ENCODE measurements at regions of chr17 and their contacts with region 1.

Region 1: GRCh38 chr17:36844013-36844412 is 93.3 kb upstream of the LHX1 start:
- DNase-seq: no peak
- ATAC-seq: peak; percentile 68
- H3K4me3 Mint-ChIP-seq: no peak overlapping the region
- H3K27ac Mint-ChIP-seq: no peak overlapping the region
- H3K4me1 Mint-ChIP-seq: peaks cover 4% of the 10 kb centered on the region
- H3K27me3 Mint-ChIP-seq: peaks cover 22% of the 10 kb centered on the region

Region 2: DNA sequence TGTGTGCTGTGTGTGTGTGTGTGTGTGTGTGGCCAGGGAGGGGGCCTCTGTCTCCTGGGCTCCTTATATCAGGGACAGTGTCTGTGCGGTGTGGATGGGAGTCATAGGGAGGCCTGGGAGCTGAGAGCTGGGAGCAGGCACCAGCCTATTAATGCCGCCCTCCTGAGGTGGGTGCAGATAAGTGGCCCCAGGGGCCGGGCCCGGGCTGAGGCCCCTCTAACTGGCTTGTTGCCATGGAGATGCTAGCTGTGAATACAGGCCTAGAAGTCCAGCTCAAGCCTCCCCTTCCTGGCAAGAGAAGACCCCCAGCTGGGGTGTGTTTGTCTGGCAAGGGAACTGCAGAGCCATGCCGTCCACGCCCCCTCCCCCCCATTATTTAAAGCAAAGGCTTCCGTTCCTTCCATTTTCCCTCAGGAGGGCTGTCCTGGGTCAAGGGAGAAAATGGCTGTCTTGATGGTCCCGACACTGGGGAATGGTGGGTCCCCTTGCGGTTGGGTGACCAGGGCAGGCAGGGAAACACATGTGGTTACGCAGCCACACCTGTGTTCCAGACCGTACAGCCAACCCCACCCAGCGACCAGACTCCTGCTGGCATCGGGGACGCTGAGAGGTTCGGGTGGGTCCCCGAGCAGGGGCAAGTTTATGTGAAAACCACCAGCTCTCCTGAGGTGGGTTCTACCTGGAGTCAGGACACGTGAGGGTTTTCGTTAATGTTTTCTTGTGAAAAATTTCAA is 101.6 kb before region 1 on chr17:
- CTCF ChIA-PET with region 1: no interaction called
- POLR2A ChIA-PET with region 1: interaction called, 16 read pairs
- intact Hi-C with region 1: no loop called
- DNase-seq: no peak
- ATAC-seq: no peak
- H3K4me3 Mint-ChIP-seq: no peak overlapping the region
- H3K27ac Mint-ChIP-seq: no peak overlapping the region
- H3K4me1 Mint-ChIP-seq: no peaks in the 10 kb centered on the region
- H3K27me3 Mint-ChIP-seq: peaks cover 6% of the 10 kb centered on the region

Region 3: GRCh38 chr17:36791150-36791941 is 52.7 kb before region 1 on chr17:
- CTCF ChIA-PET with region 1: no interaction called
- POLR2A ChIA-PET with region 1: no interaction called
- intact Hi-C with region 1: loop called in 1 of 2 experiments (anchors 5 kb)
- DNase-seq: no peak
- ATAC-seq: no peak
- H3K4me3 Mint-ChIP-seq: no peak overlapping the region
- H3K27ac Mint-ChIP-seq: no peak overlapping the region
- H3K4me1 Mint-ChIP-seq: no peaks in the 10 kb centered on the region
- H3K27me3 Mint-ChIP-seq: peaks cover 17% of the 10 kb centered on the region

Region 4: DNA sequence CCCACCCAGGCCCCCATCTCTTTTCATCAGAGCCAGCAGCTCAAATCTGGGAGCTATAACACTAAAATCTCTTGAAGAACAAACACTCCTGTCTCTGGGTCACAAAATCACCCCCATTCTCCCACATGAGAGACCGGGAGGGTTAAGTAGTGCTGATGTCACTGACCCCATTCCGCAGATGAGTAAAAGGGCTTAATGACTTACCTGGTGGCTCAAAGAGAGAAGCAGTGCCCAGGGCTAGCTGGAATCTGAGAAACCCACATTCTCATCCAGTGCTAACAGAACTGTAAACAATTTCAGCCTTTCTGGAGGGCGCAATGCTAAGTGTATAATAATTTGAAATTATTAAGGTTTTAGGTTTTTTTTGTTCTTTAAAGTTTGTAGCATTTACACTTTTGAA is 67.0 kb after region 1 on chr17:
- CTCF ChIA-PET with region 1: no interaction called
- POLR2A ChIA-PET with region 1: no interaction called
- intact Hi-C with region 1: no loop called
- DNase-seq: no peak
- ATAC-seq: no peak
- H3K4me3 Mint-ChIP-seq: no peak overlapping the region
- H3K27ac Mint-ChIP-seq: no peak overlapping the region
- H3K4me1 Mint-ChIP-seq: no peaks in the 10 kb centered on the region
- H3K27me3 Mint-ChIP-seq: peaks cover 31% of the 10 kb centered on the region

Region 5: DNA sequence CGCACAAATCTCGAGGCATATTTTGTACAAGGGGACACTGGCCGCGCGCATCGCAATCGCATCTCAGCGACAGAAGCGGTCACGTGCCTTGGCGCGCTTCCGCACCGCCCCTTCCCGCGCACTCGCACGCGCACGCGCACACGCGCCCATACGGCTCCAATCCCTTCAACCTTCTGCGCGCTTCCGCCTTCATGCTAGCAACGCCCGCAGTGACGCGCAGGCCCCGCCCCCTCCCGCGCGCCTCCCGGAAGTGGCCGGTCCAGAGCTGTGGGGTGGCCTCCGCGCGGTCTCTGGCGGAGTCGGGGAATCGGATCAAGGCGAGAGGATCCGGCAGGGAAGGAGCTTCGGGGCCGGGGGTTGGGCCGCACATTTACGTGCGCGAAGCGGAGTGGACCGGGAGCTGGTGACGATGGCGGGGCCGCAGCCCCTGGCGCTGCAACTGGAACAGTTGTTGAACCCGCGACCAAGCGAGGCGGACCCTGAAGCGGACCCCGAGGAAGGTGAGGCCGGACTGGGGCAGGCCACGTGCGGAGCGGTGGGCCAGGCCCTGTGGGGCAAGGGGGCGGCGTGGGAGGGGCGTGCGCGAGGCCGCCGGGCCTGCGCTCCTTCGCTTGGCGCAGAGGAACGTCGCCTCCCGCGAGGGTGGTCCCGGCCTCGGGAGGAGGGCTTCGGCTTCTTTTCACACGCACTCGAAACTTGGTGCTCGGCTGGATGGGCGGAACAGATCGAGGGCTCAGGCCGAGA is 104.9 kb after region 1 on chr17 and contains the start of gene AATF:
- CTCF ChIA-PET with region 1: no interaction called
- POLR2A ChIA-PET with region 1: no interaction called
- intact Hi-C with region 1: no loop called
- DNase-seq: peak; percentile 97
- ATAC-seq: peak; percentile 99
- H3K4me3 Mint-ChIP-seq: peak within 1 kb of the TSS; percentile 90
- H3K27ac Mint-ChIP-seq: peak within 1 kb of the TSS; percentile 94
- H3K4me1 Mint-ChIP-seq: peaks cover 47% of the 10 kb centered on the region
- H3K27me3 Mint-ChIP-seq: peaks cover 28% of the 10 kb centered on the region
- total RNA-seq, gene AATF: 87.9 to 149 TPM

Measured in activated CD4-positive, alpha-beta T cell treated with anti-CD3 and anti-CD28 coated beads for 36 hours (primary cell).